Activated CD4-positive, alpha-beta T cell treated with anti-CD3 and anti-CD28 coated beads for 36 hours (primary cell): ENCODE measurements at regions of chr13 and their contacts with region 1.

Region 1: GRCh38 chr13:73058736-73059459 is at the start of gene KLF5:
- DNase-seq: peak; percentile 98
- ATAC-seq: peak; percentile 98
- H3K4me3 Mint-ChIP-seq: peak within 1 kb of the TSS; percentile 76
- H3K27ac Mint-ChIP-seq: peak within 1 kb of the TSS; percentile 45
- H3K4me1 Mint-ChIP-seq: peaks cover 16% of the 10 kb centered on the region
- H3K27me3 Mint-ChIP-seq: peaks cover 24% of the 10 kb centered on the region
- total RNA-seq, gene KLF5: 2.3 to 4.6 TPM

Region 2: DNA sequence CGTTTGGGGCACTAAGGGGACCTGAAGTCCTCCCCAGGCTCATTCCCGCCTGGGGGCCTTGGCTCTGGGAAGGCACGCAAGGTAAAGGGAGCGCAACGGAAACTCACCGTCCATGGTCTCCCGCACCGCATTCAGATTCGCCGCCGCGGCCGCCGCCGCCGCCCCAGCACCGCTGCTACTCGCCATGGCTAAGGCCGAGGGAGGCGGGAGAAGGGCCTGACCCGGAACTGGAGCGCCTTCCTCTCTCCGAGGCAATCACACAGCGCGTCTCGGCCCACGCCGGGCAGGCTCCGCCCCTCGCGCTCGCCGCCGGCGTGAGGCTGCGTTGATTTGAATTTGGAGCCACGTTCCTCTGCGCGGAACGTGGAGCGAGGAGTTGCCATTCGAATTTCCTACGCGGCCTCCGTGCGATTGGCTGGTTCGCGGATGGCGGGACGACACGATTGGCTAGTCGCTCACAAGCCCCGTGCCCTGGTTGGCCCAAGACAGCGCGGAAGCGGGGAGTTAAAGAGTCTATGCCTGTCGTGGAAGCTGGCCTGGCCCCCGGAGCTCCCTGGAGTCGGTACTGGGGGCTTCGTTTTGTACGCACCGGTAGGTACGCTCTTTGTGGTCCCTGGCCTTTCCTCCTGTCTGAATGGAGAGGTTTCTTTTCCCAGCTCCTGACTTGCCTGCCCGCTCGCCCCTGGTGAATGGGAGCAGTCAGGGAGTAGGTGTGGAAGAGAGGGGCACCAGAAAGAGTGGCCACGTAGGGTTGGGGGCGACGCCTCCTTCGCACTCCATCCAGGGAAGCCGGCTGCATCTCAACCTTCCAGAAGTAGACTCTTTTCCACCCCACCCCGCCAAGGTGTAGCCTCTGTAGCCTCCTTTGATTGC is 331.2 kb before region 1 on chr13 and contains the starts of genes BORA and MZT1:
- CTCF ChIA-PET with region 1: no interaction called
- POLR2A ChIA-PET with region 1: no interaction called
- intact Hi-C with region 1: loop called in 1 of 2 experiments (anchors 1 kb)
- DNase-seq: peak; percentile 97
- ATAC-seq: peak; percentile 96
- H3K4me3 Mint-ChIP-seq: peak within 1 kb of the TSS; percentile 91
- H3K27ac Mint-ChIP-seq: peak within 1 kb of the TSS; percentile 89
- H3K4me1 Mint-ChIP-seq: peaks cover 39% of the 10 kb centered on the region
- H3K27me3 Mint-ChIP-seq: no peaks in the 10 kb centered on the region
- total RNA-seq, gene BORA: 20.8 to 21.2 TPM
- total RNA-seq, gene MZT1: 10.6 to 26.9 TPM

Region 3: DNA sequence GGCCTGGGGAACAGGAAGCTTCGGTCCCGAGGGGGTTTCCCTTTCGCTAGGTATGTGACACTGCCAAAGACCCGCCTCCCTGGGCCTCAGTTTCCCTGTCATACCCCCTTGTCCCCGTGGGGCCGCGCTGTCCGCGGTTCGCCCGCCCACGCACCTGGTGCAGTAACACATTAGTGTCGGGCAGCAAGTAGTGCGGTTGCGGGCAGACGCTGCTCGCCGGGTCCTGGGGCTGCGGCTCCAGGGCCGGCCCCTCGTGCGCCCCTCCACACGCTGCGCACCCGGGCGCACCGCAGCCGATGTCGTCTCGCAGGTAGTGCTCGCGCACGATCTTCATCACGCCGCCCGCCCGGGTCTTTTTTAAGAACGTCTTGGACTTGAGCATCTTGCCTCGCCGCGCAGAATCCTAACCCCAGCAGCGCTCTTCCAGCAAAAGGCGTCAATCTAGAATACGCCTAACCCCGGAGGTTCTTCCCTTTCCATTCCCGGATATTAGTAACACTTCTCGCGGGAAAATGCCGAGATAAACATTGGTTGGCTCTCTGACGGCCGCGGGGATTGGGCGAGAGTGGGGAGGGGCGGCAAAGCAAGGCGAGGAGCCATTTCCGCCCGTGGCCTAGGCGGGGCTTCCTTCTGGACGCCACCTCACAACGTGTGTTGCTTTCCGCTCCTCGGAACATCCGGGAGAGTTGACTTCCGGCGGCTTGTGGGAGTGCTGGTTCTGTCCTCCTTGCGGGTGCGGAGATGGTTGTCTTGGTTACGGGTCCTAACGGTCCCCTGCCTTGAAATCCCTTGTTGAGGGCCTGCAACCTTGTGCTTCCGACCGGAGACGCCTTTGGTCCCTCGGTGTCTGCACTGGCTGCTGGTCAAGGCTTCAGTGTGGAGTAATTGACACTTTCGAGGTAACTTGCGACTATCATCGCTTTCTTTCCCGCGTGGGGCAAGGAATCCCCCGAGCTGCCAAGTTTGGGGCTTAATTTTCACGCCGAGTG is 277.2 kb before region 1 on chr13 and contains the starts of genes DIS3 and PIBF1:
- CTCF ChIA-PET with region 1: interaction called, 4 read pairs
- POLR2A ChIA-PET with region 1: no interaction called
- intact Hi-C with region 1: loop called (anchors 2 kb)
- DNase-seq: peak; percentile 98
- ATAC-seq: peak; percentile 98
- H3K4me3 Mint-ChIP-seq: peak within 1 kb of the TSS; percentile 94
- H3K27ac Mint-ChIP-seq: peak within 1 kb of the TSS; percentile 97
- H3K4me1 Mint-ChIP-seq: peaks cover 55% of the 10 kb centered on the region
- H3K27me3 Mint-ChIP-seq: no peaks in the 10 kb centered on the region
- total RNA-seq, gene DIS3: 55.0 to 63.5 TPM
- total RNA-seq, gene PIBF1: 25.7 to 25.9 TPM

Region 4: GRCh38 chr13:72808917-72809500 is 249.9 kb before region 1 on chr13:
- CTCF ChIA-PET with region 1: interaction called, 3 read pairs
- POLR2A ChIA-PET with region 1: no interaction called
- intact Hi-C with region 1: loop called in 1 of 2 experiments (anchors 2 kb)
- DNase-seq: no peak
- ATAC-seq: no peak
- H3K4me3 Mint-ChIP-seq: no peak overlapping the region
- H3K27ac Mint-ChIP-seq: no peak overlapping the region
- H3K4me1 Mint-ChIP-seq: no peaks in the 10 kb centered on the region
- H3K27me3 Mint-ChIP-seq: no peaks in the 10 kb centered on the region

Region 5: GRCh38 chr13:73421310-73421912 is 362.5 kb after region 1 on chr13:
- CTCF ChIA-PET with region 1: interaction called, 3 read pairs
- POLR2A ChIA-PET with region 1: no interaction called
- intact Hi-C with region 1: loop called in 1 of 2 experiments (anchors 2 kb)
- DNase-seq: peak; percentile 52
- ATAC-seq: peak; percentile 94
- H3K4me3 Mint-ChIP-seq: no peak overlapping the region
- H3K27ac Mint-ChIP-seq: no peak overlapping the region
- H3K4me1 Mint-ChIP-seq: peaks cover 5% of the 10 kb centered on the region
- H3K27me3 Mint-ChIP-seq: no peaks in the 10 kb centered on the region